Astrocyte of the cerebellum (primary cell): ENCODE measurements at regions of chr2 and their contacts with region 1.

Region 1: DNA sequence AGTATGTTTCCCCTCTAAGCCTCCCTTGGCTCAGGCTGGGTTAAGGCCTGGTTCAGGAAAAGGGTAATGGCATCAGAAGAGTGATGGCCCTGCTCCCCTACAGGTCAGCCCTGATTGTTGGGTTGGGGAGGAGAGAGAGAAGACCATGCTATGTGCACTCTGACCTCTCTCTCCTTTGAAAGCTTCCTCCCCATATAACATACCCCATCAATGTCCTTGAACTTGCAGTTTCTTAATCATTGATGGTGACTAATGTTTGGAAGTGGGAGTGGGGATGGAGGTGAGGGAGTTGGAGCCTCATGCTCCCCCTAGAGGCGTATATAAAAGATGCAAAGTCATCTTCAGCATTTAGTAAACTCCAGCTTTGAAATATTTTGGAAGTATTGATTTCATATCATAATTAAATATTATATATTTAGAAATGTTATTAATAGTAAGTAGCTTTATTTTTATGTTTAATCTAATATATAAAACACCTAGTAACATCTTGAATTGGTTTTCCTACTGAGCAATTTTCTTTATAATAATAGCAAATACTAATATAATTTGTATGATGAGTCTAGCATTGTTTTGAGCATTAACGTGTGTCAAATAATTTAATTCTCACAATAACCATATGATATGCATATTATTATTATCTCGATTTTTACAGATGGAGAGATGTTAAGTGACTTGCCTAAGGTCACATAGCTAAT is 8.8 kb downstream of the PLCL1 start:
- DNase-seq: no peak
- H3K4me3 ChIP-seq: no peak overlapping the region
- CTCF ChIP-seq: peak; percentile 51

Region 2: DNA sequence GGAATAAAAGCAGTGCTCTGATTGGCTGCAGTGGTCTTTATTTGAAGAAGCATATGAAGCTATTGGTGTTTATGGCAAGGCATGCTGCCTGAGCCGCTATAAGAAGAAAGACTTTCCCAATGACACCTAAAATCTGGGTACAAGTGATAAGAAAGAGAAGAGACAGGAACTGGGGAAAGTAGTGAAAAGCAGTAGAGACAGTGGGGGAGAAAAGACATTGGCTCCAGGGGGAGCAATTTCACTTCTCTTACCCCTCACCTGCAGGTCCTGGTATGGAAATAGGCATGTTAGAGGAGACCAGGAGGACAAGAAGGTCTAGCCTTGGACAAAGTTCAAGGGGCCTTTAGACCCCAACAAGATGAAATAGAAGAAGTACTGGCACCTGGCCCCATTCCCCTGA is 38.2 kb after region 1 on chr2:
- in situ Hi-C with region 1: loop called (anchors 5 kb)
- DNase-seq: no peak
- H3K4me3 ChIP-seq: no peak overlapping the region
- CTCF ChIP-seq: peak; percentile 22